HCT116 (cell line): ENCODE measurements at regions of chr2 and their contacts with region 1.

Region 1: DNA sequence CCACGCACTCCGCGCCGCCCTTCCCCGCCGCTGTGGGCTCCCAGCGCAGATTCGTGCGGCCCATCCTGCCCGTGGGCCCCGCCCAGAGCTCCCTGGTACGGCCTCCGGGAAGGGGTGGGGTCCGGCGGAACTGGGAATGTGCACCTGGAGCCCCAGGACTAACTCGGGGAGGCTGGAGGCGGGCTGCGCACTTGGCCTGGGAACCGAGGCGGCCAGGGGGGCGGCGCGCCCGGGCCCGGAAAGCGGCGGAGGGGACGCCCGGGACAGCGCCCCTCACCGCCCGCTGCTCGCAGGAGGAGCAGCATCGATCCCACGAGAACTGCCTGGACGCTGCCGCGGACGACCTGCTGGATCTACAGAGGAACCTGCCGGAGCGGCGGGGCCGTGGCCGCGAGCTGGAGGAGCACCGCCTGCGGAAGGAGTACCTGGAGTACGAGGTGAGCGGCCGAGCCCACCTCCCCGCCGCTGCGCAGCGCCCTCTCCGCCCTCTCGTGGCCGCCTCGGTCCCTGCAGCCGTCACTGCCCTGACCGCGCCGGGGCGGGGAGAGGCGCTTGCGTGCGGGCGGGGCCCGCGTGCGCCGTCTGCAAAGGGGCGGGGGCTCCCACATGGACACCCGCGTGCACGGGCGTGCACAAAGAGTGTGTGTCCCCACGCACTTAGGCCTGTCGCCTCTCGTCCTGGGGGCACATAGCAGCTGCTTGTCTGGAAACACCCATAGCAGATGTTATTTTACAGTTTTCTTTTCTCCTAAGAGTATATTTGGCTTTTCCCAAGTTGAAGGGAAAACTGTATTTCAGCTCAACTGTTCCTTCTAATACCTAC is 25.2 kb downstream of the PSD4 start:
- DNase-seq: peak; percentile 71
- ATAC-seq: peak; percentile 86
- H3K4me3 ChIP-seq: peak overlapping the region; percentile 50 to 69
- H3K27ac ChIP-seq: peak overlapping the region; percentile 93
- H3K4me1 ChIP-seq: peaks cover 12 to 34% of the 10 kb centered on the region in 2 experiments
- H3K27me3 ChIP-seq: no peaks in the 10 kb centered on the region
- CTCF ChIP-seq: peak; percentile 71 to 98 (median 80)
- POLR2A ChIP-seq: peak; percentile 46
- RAD21 ChIP-seq: peak; percentile 80

Region 2: GRCh38 chr2:113080134-113080533 is 118.9 kb before region 1 on chr2:
- CTCF ChIA-PET with region 1: interaction called, 62 read pairs
- POLR2A ChIA-PET with region 1: interaction called, 9 read pairs
- RAD21 ChIA-PET with region 1: interaction called, 3 to 12 read pairs
- intact Hi-C with region 1: loop called (anchors 1 kb)
- DNase-seq: peak; percentile 13
- ATAC-seq: peak; percentile 86
- H3K4me3 ChIP-seq: no peak overlapping the region
- H3K27ac ChIP-seq: no peak overlapping the region
- H3K4me1 ChIP-seq: peaks cover 12 to 26% of the 10 kb centered on the region in 2 experiments
- H3K27me3 ChIP-seq: no peaks in the 10 kb centered on the region
- CTCF ChIP-seq: peak; percentile 79 to 91 (median 85)
- POLR2A ChIP-seq: no peak
- RAD21 ChIP-seq: peak; percentile 87

Region 3: DNA sequence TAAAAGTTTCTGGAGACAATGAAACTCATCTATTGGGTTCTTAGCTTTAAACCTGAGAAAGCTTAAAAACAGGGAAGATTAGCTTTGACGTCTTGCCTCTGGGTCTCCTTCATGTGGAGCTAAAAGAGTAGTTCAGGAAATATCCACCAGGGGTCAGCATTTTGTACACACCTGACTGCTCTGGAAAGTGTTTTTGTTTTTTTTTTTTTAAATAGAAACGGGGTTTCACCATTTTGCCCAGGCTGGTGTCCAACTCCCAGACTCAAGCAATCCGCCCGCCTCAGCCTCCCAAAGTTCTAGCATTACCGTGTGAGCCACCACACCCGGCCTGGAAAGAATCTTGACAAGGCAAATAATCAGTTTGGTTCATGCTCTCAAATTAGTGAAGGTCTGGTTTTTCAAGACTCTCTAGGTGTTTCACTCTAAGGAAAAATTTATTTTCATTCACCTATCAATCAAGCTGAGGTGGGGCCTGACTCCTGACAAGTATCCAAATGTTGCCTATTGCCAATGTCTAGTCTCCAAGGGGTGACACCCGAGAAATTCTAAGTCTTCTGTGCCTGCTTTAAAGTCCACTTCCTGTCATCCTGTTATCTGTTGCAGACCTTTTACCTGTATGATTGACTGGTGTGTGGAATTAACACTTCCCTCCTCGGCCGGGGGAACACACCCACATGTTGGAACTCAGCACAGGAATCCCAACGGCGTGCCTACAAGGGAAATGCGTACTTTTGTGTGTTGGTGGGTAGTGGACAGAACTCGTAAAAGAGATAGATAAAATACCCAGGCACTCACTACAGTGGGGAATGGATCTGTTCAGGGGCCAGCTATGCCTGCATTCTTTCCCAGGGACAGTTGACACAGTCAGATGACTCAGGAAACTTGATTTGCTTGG is 60.3 kb before region 1 on chr2:
- CTCF ChIA-PET with region 1: interaction called, 103 read pairs
- POLR2A ChIA-PET with region 1: interaction called, 11 read pairs
- RAD21 ChIA-PET with region 1: interaction called, 3 to 10 read pairs
- intact Hi-C with region 1: loop called (anchors 1 kb)
- DNase-seq: peak; percentile 79
- ATAC-seq: peak; percentile 80
- H3K4me3 ChIP-seq: 0 out of 4 replicates have a peak overlapping the region, but pooled peaks of 1 of the 2 experiments have one; percentile 5
- H3K27ac ChIP-seq: no peak overlapping the region
- H3K4me1 ChIP-seq: peaks cover 0 to 16% of the 10 kb centered on the region in 2 experiments; a peak in 3 of 4 replicates
- H3K27me3 ChIP-seq: no peaks in the 10 kb centered on the region
- CTCF ChIP-seq: peak; percentile 75 to 93 (median 75)
- POLR2A ChIP-seq: no peak
- RAD21 ChIP-seq: peak; percentile 77

Region 4: DNA sequence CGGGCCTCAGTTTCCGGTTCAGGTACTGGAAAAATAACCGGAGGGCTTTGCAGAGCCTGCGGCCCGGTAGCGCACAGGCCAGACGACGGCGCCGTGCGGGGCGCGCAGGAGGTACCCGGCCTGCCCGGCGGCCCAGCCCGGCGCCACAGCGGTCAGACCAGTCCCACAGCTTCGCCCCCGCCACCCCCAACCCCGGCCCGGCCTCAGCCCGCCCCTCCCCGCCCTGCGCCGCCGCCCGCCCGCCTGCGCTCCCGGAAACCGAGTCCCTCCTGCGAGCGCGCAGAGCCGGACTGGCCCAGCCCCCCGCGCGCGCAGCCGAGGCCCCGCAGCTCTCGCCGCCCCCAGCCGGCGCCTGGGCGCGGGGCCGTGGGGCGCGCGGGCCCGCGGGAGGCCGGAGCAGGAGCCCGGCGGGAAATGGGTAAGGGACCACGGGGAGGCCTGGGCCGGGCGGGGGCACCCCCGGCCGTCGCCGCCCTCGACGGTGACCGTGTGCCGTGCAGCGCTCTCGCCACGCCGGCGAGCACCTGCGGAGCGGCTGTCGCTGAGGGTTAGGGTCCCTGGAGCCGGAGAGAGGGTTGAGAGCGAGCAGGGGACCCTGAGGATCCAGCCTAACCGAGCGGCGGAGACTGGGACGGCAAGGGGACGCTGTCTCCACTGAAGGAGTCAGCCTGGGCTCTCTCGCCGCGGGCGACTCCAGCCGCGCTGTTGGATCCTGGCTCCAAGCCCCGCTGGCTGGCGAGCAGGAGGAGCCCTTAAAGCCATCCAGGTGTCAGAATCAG is 41.7 kb before region 1 on chr2:
- CTCF ChIA-PET with region 1: interaction called, 12 read pairs
- POLR2A ChIA-PET with region 1: interaction called, 8 read pairs
- RAD21 ChIA-PET with region 1: no interaction called
- intact Hi-C with region 1: loop called (anchors 5 kb)
- DNase-seq: no peak
- ATAC-seq: peak; percentile 84
- H3K4me3 ChIP-seq: peak overlapping the region; percentile 66 to 74
- H3K27ac ChIP-seq: peak overlapping the region; percentile 80
- H3K4me1 ChIP-seq: peaks cover 22 to 35% of the 10 kb centered on the region in 2 experiments; a peak in 3 of 4 replicates
- H3K27me3 ChIP-seq: no peaks in the 10 kb centered on the region
- CTCF ChIP-seq: no peak
- POLR2A ChIP-seq: no peak
- RAD21 ChIP-seq: no peak

Region 5: DNA sequence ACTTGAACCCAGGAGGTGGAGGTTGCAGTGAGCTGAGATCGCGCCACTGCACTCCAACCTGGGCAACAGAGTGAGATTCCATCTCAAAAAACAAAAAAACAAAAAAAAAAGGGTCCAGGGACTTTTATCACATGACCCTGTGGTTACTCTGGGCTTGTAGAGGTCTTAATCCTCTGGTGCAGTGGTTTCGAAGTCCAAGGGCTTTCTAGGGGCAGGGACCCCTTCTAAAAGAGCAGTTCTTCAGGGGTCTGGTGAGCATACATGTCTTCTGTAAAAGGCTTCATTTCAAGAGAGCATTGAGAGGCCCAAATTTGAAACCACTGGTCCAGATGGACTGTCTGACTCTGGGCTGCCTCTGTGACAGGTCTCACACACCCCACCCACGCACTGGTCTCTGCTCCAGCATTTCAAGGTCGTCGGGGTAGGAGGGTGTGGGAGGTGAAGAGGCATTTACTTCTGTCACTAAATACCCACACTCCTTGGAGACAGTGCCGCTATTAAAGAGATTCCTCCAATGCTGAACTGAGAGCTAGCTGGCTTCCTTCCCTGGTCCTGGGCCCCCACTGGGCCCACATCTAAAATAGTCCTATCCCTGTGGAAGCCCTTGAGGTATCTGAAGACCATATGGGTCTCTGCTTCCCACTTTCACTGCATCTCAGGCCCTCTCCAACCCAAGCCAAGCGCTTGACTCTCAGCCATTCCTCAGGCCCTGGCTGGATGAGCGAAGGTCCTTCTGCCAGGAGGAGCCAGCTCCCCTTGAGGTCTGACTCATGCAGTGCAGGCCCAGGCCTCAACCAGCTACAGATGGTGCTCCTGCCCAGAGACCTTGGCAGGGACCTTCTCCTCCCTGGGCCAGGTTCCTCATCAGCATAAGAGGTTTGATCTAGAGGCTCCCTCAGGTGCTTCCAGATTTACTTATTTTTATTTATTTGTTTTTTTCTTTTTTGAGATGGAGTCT is 34.9 kb after region 1 on chr2:
- CTCF ChIA-PET with region 1: interaction called, 29 read pairs
- POLR2A ChIA-PET with region 1: interaction called, 11 read pairs
- RAD21 ChIA-PET with region 1: interaction called, 5 to 6 read pairs
- intact Hi-C with region 1: loop called (anchors 2 kb)
- DNase-seq: no peak
- ATAC-seq: peak; percentile 67
- H3K4me3 ChIP-seq: peak overlapping the region in 1 of 2 experiments; percentile 93; a peak in 1 of 4 replicates
- H3K27ac ChIP-seq: peak overlapping the region; percentile 95; the same call in 1 of the 2 replicates
- H3K4me1 ChIP-seq: peaks cover 34 to 43% of the 10 kb centered on the region in 2 experiments
- H3K27me3 ChIP-seq: no peaks in the 10 kb centered on the region
- CTCF ChIP-seq: peak in 2 of 3 experiments; percentile 29 to 40; a peak in 3 of 6 replicates
- POLR2A ChIP-seq: no peak
- RAD21 ChIP-seq: no peak

Region 6: GRCh38 chr2:113240150-113240862 is 41.3 kb after region 1 on chr2:
- CTCF ChIA-PET with region 1: interaction called, 29 read pairs
- POLR2A ChIA-PET with region 1: interaction called, 11 read pairs
- RAD21 ChIA-PET with region 1: interaction called, 5 to 8 read pairs
- intact Hi-C with region 1: loop called (anchors 1 kb)
- DNase-seq: peak; percentile 55
- ATAC-seq: peak; percentile 50
- H3K4me3 ChIP-seq: peak overlapping the region in 1 of 2 experiments; percentile 38; a peak in 3 of 4 replicates
- H3K27ac ChIP-seq: peak overlapping the region; percentile 95
- H3K4me1 ChIP-seq: peaks cover 53 to 65% of the 10 kb centered on the region in 2 experiments
- H3K27me3 ChIP-seq: no peaks in the 10 kb centered on the region
- CTCF ChIP-seq: 0 out of 6 replicates have a peak, but pooled peaks of 1 of the 3 experiments have one; percentile 10
- POLR2A ChIP-seq: peak; percentile 7
- RAD21 ChIP-seq: no peak